ENCODE measurements at regions of chr10 and their contacts with region 1.

Region 1: GRCh38 chr10:79195091-79195923 is 126.5 kb downstream of the ZMIZ1 start:
- DNase-seq: peak; percentile 80 to 90 (median 88)
- H3K4me3 ChIP-seq: no peak overlapping the region
- H3K27ac ChIP-seq: peak overlapping the region in 1 of 2 donors; percentile 53
- H3K4me1 ChIP-seq: peaks cover 19% of the 10 kb centered on the region
- H3K27me3 ChIP-seq: no peaks in the 10 kb centered on the region
- CTCF ChIP-seq: peak; percentile 95 to 97 (median 97)
- EP300 ChIP-seq: no peak
- POLR2A ChIP-seq: no peak

Region 2: GRCh38 chr10:78047314-78047891 is 1147.9 kb before region 1 on chr10:
- intact Hi-C with region 1: loop called in 3 of 4 experiments (anchors 5 kb)
- DNase-seq: peak; percentile 83 to 92 (median 91)
- H3K4me3 ChIP-seq: no peak overlapping the region
- H3K27ac ChIP-seq: no peak overlapping the region
- H3K4me1 ChIP-seq: no peaks in the 10 kb centered on the region
- H3K27me3 ChIP-seq: no peaks in the 10 kb centered on the region
- CTCF ChIP-seq: peak; percentile 77 to 83 (median 78)
- EP300 ChIP-seq: no peak
- POLR2A ChIP-seq: no peak

Region 3: GRCh38 chr10:78211561-78212051 is 983.7 kb before region 1 on chr10:
- intact Hi-C with region 1: loop called (anchors 5 to 10 kb)
- DNase-seq: peak; percentile 52 to 69 (median 58)
- H3K4me3 ChIP-seq: no peak overlapping the region
- H3K27ac ChIP-seq: no peak overlapping the region
- H3K4me1 ChIP-seq: peaks cover 14% of the 10 kb centered on the region
- H3K27me3 ChIP-seq: no peaks in the 10 kb centered on the region
- CTCF ChIP-seq: peak in 2 of 3 donors; percentile 35 to 43
- EP300 ChIP-seq: no peak
- POLR2A ChIP-seq: no peak

Region 4: DNA sequence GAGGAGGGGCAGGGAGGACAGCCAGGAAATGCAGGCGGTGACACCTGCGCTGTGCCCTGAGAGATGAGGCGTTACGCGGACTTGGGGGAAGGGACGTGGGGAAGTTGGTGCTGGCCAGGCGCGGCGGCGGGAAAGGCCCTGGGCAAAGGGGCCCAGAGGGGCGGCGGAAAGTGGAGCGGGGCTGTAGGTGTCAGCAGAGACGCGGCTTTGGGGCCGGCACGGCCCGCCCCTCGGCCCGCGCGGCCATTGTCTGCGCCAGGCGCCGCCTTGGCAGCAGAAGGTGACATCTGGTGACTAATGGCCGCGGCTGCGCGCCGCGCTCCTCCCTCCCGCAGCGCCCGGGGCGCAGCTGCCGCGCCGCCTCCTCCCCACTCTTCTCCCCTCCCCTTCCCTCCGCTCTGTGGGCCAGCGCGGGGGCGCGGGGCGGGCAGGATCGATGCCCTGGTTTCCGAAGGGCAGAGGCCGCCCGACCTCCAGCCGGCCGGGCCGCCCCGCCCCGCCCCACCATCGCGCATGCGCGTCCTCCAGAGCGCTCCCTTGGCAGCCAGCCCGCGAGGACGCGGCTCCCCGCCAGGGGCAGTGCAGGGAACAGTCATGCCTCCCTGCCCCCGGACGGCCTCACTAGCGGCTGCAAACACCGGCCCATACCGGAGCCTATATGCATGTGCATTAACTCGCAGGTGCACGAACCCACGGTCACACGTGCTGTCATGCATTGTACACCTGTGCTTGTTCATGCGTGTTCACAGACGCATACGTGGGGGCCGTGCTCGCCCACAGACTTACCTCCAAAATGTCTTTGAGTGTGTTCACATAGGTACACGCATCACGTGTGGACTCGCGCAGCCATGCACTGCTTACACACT is 892.1 kb before region 1 on chr10:
- intact Hi-C with region 1: loop called in 3 of 4 experiments (anchors 5 to 10 kb)
- DNase-seq: peak; percentile 92 to 99 (median 96)
- H3K4me3 ChIP-seq: peak overlapping the region; percentile 48
- H3K27ac ChIP-seq: peak overlapping the region; percentile 18 to 68
- H3K4me1 ChIP-seq: peaks cover 7% of the 10 kb centered on the region
- H3K27me3 ChIP-seq: no peaks in the 10 kb centered on the region
- CTCF ChIP-seq: peak; percentile 50 to 91 (median 89)
- EP300 ChIP-seq: no peak
- POLR2A ChIP-seq: no peak

Region 5: DNA sequence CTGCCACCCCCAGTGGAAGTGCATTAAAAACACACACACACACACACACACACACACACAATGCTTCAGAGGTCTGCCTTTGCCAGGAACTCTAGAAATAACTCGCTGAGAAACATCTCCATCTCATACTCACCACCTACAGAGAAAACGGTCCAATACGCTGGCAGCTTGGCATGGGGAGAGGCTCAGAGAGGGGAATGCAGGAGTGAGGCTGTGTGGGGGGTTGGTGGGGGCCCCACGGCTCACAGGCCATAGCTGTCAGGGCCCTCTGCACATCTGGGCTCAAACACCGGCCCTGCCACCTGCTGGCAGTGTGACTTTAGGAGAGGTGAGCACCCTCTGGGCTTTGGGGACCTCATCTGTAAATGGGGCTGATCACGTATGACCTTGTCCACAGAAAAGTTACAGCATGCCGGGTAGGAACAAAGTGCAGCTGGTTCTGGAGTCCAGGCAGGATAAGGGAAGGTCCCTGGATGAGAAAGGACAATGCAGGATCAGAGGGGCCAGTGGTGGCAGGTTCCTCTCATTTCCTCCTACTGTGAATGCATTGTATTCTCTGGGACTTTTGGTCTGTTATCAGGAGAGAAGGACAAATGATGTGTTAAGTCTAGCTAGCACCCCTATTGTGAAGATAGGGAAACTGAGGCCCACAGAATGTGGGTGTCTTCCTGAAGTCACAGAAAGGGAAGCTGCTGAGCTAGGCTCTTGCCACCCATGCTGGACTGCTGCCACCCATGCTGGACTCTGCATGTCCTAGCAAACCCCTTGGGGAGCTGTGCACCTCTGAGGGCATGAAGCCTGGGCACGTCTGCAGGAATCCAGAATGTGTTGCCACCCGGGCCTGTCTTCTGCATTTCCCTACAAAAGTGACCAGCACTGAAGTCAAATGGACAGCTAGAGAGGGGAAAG is 757.1 kb before region 1 on chr10:
- intact Hi-C with region 1: loop called in 1 of 4 experiments (anchors 10 kb)
- DNase-seq: peak in 2 of 5 donors; percentile 4 to 8
- H3K4me3 ChIP-seq: no peak overlapping the region
- H3K27ac ChIP-seq: no peak overlapping the region
- H3K4me1 ChIP-seq: no peaks in the 10 kb centered on the region
- H3K27me3 ChIP-seq: no peaks in the 10 kb centered on the region
- CTCF ChIP-seq: no peak
- EP300 ChIP-seq: no peak
- POLR2A ChIP-seq: no peak

Region 6: GRCh38 chr10:78798976-78799730 is 396.2 kb before region 1 on chr10:
- intact Hi-C with region 1: loop called in 1 of 4 experiments (anchors 10 kb)
- DNase-seq: no peak
- H3K4me3 ChIP-seq: no peak overlapping the region
- H3K27ac ChIP-seq: no peak overlapping the region
- H3K4me1 ChIP-seq: peaks cover 18% of the 10 kb centered on the region
- H3K27me3 ChIP-seq: no peaks in the 10 kb centered on the region
- CTCF ChIP-seq: no peak
- EP300 ChIP-seq: no peak
- POLR2A ChIP-seq: no peak

Region 7: DNA sequence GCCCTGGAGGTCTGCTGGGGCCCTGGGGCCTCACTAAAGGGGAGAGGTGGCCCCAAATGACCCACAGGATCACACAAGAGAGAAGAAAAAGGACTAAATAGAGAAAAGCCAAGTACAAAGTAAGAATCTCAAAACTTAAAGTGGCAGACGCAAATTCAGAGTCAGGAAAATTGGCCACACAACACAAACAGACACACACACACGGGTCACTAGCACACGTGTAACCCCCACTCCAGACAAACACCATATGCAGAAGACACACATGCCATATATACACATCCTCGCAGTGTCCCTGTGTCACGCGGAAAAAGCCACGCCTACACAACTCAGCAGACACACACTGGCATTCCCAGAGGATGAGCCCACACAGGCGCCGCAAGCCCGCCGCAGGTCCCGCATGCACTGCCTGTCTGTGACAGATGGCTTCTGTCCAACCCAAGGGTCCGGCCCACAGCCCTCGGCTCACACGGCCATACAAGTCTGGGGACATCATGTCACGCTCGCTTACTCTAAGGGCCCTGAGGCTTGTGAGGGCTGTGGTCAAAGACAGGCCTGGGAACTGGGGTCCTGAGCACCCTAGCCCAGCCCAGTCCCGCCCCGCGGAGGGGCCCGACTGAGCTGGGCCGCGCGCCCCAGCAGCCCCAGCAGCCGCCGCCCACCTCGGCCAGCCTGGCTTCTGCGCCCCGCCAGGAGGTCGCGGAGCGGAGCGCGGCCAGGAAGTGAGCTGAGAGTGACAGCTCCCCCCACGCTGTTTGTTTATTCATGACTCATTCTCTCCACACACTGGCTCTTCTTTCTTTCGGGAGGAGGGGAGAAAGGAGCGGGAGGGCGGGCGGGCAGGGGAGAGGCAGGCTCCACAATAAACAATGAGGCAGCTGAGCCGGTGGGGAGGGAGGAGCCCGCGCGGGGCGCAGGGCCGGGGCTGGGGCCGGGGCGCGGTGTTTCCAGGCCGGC is 222.1 kb before region 1 on chr10:
- intact Hi-C with region 1: loop called in 1 of 4 experiments (anchors 10 kb)
- DNase-seq: peak in 4 of 5 donors; percentile 66 to 86 (median 79)
- H3K4me3 ChIP-seq: peak overlapping the region; percentile 50
- H3K27ac ChIP-seq: peak overlapping the region; percentile 92 to 95
- H3K4me1 ChIP-seq: peaks cover 26% of the 10 kb centered on the region
- H3K27me3 ChIP-seq: no peaks in the 10 kb centered on the region
- CTCF ChIP-seq: peak in 1 of 3 donors; percentile 35
- EP300 ChIP-seq: no peak
- POLR2A ChIP-seq: peak; percentile 34

Region 8: GRCh38 chr10:79292891-79293746 is 97.8 kb after region 1 on chr10:
- intact Hi-C with region 1: no loop called
- DNase-seq: no peak
- H3K4me3 ChIP-seq: no peak overlapping the region
- H3K27ac ChIP-seq: no peak overlapping the region
- H3K4me1 ChIP-seq: peaks cover 2% of the 10 kb centered on the region
- H3K27me3 ChIP-seq: no peaks in the 10 kb centered on the region
- CTCF ChIP-seq: no peak
- EP300 ChIP-seq: no peak
- POLR2A ChIP-seq: no peak

Region 9: GRCh38 chr10:79487296-79488194 is 292.2 kb after region 1 on chr10:
- intact Hi-C with region 1: no loop called
- DNase-seq: peak; percentile 32 to 61 (median 43)
- H3K4me3 ChIP-seq: no peak overlapping the region
- H3K27ac ChIP-seq: no peak overlapping the region
- H3K4me1 ChIP-seq: peaks cover 7% of the 10 kb centered on the region
- H3K27me3 ChIP-seq: no peaks in the 10 kb centered on the region
- CTCF ChIP-seq: peak in 2 of 3 donors; percentile 11 to 15
- EP300 ChIP-seq: no peak
- POLR2A ChIP-seq: no peak

Measured in ovary (tissue), 10 donors.